A673 (cell line): ENCODE measurements at regions of chr5 and their contacts with region 1.

Region 1: GRCh38 chr5:96997265-96997859 is 61.5 kb downstream of the LNPEP start:
- DNase-seq: peak; percentile 67
- H3K4me3 ChIP-seq: no peak overlapping the region
- H3K27ac ChIP-seq: no peak overlapping the region
- H3K4me1 ChIP-seq: no peaks in the 10 kb centered on the region
- H3K27me3 ChIP-seq: no peaks in the 10 kb centered on the region
- CTCF ChIP-seq: peak; percentile 68

Region 2: GRCh38 chr5:97142521-97143254 is 145.3 kb after region 1 on chr5 and contains the start of gene LIX1:
- CTCF ChIA-PET with region 1: interaction called, 17 read pairs
- POLR2A ChIA-PET with region 1: no interaction called
- intact Hi-C with region 1: loop called (anchors 5 kb)
- DNase-seq: peak; percentile 86
- H3K4me3 ChIP-seq: no peak within 1 kb of the TSS
- H3K27ac ChIP-seq: no peak within 1 kb of the TSS
- H3K4me1 ChIP-seq: no peaks in the 10 kb centered on the region
- H3K27me3 ChIP-seq: no peaks in the 10 kb centered on the region
- CTCF ChIP-seq: peak; percentile 75
- total RNA-seq, gene LIX1: not detected in 2 replicates

Region 3: GRCh38 chr5:97162045-97162444 is 164.7 kb after region 1 on chr5:
- CTCF ChIA-PET with region 1: interaction called, 3 read pairs
- POLR2A ChIA-PET with region 1: no interaction called
- intact Hi-C with region 1: loop called (anchors 5 kb)
- DNase-seq: peak; percentile 82
- H3K4me3 ChIP-seq: no peak overlapping the region
- H3K27ac ChIP-seq: no peak overlapping the region
- H3K4me1 ChIP-seq: no peaks in the 10 kb centered on the region
- H3K27me3 ChIP-seq: no peaks in the 10 kb centered on the region
- CTCF ChIP-seq: peak; percentile 86